ENCODE measurements at regions of chr12 and their contacts with region 1.

Region 1: GRCh38 chr12:30695199-30696103 is at the start of gene IPO8:
- DNase-seq: peak; percentile 95
- H3K4me3 ChIP-seq: peak within 1 kb of the TSS; percentile 94 to 99 (median 97)
- H3K27ac ChIP-seq: peak within 1 kb of the TSS; percentile 86 to 90 (median 88)
- H3K4me1 ChIP-seq: peaks cover 0 to 42% (median 40%) of the 10 kb centered on the region in 4 donors
- H3K27me3 ChIP-seq: no peaks in the 10 kb centered on the region
- CTCF ChIP-seq: peak in 2 of 4 experiments; percentile 15 to 48
- EP300 ChIP-seq: no peak
- POLR2A ChIP-seq: no peak
- total RNA-seq, gene IPO8: 32.8 to 61.2 (median 37.4) TPM

Region 2: GRCh38 chr12:30594509-30594908 is 100.9 kb before region 1 on chr12:
- intact Hi-C with region 1: no loop called
- DNase-seq: no peak
- H3K4me3 ChIP-seq: no peak overlapping the region
- H3K27ac ChIP-seq: no peak overlapping the region
- H3K4me1 ChIP-seq: no peaks in the 10 kb centered on the region
- H3K27me3 ChIP-seq: no peaks in the 10 kb centered on the region
- CTCF ChIP-seq: no peak
- EP300 ChIP-seq: no peak
- POLR2A ChIP-seq: no peak

Region 3: DNA sequence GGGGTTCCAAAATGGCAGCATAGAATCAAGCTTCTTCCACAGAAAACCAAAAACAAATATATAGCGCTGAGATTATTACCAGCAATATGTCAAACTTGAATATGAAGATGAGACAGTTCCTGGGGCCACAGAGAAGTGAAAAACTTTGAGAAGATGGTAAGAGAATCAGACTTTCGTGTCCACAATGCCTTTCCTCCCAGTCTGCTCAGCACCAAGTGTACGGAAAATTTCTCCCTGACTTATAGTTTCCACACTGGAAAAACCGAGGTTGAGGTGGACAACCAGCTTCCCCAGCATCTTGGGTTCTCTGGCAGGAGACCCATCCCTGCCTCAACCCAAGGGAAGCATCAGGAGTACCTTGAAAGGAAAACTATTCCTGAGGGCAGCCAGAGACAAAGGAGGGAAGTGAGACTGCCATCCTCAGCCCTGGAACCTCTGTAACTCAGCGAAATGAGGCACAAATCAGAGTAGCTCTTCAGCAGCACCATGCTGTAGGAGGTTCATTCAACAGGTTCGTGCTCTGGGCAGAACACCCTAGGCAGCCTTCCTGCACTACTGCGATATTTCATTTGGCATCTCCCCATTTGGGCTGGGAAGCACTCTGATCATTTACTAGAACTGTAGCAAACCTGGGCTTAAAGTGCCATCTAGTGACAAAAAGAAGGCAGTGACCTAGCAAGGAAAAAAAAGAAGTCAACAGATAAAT is 111.7 kb after region 1 on chr12:
- intact Hi-C with region 1: loop called (anchors 5 kb)
- DNase-seq: no peak
- H3K4me3 ChIP-seq: no peak overlapping the region
- H3K27ac ChIP-seq: no peak overlapping the region
- H3K4me1 ChIP-seq: peaks cover 0 to 4% (median 2%) of the 10 kb centered on the region in 4 donors
- H3K27me3 ChIP-seq: peaks cover 0 to 4% (median 0%) of the 10 kb centered on the region in 3 donors
- CTCF ChIP-seq: peak; percentile 33 to 69 (median 60)
- EP300 ChIP-seq: no peak
- POLR2A ChIP-seq: no peak